ENCODE measurements at regions of chr2 and their contacts with region 1.

Region 1: DNA sequence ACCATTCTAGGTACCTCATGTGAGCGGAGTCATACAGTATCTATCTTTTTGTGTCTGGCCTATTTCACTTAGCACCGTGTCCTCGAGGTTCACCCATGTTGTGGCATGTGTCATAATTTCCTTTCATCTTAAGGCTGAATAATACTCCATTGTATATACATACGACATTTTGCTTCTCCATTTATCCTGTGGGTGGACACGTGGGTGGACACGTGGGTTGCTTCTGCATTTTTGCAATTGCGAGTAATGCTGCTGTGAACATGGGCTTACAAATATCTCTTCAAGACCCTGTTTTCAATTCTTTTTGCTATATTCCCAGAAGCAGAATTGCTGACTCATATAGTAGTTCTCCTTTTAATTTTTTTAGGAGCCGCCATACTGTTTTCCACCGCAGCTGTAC is 243.6 kb upstream of the EPAS1 start:
- DNase-seq: no peak
- H3K4me3 Mint-ChIP-seq: no peak overlapping the region
- H3K27ac Mint-ChIP-seq: no peak overlapping the region
- H3K4me1 Mint-ChIP-seq: peaks cover 28% of the 10 kb centered on the region
- H3K27me3 Mint-ChIP-seq: no peaks in the 10 kb centered on the region

Region 2: GRCh38 chr2:46002507-46002883 is 51.1 kb before region 1 on chr2:
- intact Hi-C with region 1: no loop called
- DNase-seq: no peak
- H3K4me3 Mint-ChIP-seq: no peak overlapping the region
- H3K27ac Mint-ChIP-seq: no peak overlapping the region
- H3K4me1 Mint-ChIP-seq: no peaks in the 10 kb centered on the region
- H3K27me3 Mint-ChIP-seq: peaks cover 3% of the 10 kb centered on the region

Region 3: DNA sequence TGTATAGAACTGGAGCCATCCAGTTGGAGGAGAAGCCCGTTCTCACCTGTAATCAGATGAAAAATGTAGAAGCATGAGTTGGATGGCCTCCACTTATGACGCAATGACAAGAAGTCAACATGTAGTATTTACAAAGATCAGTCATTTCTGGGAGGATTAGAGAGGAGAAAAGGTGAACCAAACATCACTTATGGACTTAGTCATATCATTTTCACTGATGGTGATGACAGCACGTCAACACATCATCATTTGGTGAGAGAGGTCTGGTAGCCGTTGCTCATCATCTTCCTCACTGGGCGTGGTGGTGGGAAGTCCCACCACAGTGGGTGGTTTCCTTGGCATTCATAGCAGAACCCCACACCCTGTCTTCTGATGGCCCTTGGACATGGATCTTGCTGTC is 20.6 kb before region 1 on chr2:
- intact Hi-C with region 1: loop called (anchors 2 kb)
- DNase-seq: peak; percentile 38
- H3K4me3 Mint-ChIP-seq: no peak overlapping the region
- H3K27ac Mint-ChIP-seq: peak overlapping the region; percentile 41
- H3K4me1 Mint-ChIP-seq: peaks cover 22% of the 10 kb centered on the region
- H3K27me3 Mint-ChIP-seq: no peaks in the 10 kb centered on the region

Region 4: GRCh38 chr2:46230115-46230571 is 176.6 kb after region 1 on chr2:
- intact Hi-C with region 1: no loop called
- DNase-seq: no peak
- H3K4me3 Mint-ChIP-seq: no peak overlapping the region
- H3K27ac Mint-ChIP-seq: peak overlapping the region; percentile 90
- H3K4me1 Mint-ChIP-seq: peaks cover 48% of the 10 kb centered on the region
- H3K27me3 Mint-ChIP-seq: peaks cover 9% of the 10 kb centered on the region